Activated CD4-positive, alpha-beta T cell treated with anti-CD3 and anti-CD28 coated beads, Interleukin-2, amount 10 ng/mL, durations not matched to agents 24 days and 14 days (primary cell): ENCODE measurements at regions of chr4 and their contacts with region 1.

Region 1: DNA sequence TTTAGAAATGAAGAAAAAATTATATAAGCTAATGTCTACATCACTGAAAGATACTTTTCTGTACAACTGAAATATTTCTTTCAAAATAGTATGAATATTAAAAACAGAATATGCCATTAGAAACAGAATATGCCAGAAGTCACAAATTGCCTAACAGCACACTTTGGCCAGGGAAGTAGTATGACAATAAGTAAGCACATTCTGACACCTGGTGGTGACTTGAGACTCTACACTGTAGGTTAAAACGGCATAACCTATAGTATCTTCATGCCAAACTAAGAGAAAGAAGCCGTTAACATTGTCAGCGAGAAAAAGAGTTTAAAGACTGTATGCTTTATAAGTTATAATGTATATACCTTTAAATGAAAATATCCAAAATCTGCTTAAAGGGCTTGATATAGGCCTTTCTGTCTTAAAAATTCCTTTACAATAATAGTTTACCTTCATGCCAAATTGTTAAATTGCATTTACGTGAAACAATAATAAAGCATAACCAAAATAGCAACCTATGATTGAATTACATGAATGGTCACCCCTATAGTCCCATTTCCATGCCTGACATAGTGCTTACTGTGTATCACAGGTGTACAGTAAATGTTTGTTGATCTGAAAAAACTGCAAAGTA is 32.8 kb downstream of the FAM13A start:
- DNase-seq: peak; percentile 89
- H3K4me3 Mint-ChIP-seq: no peak overlapping the region
- H3K27ac Mint-ChIP-seq: no peak overlapping the region
- H3K4me1 Mint-ChIP-seq: peaks cover 2% of the 10 kb centered on the region
- H3K27me3 Mint-ChIP-seq: no peaks in the 10 kb centered on the region

Region 2: DNA sequence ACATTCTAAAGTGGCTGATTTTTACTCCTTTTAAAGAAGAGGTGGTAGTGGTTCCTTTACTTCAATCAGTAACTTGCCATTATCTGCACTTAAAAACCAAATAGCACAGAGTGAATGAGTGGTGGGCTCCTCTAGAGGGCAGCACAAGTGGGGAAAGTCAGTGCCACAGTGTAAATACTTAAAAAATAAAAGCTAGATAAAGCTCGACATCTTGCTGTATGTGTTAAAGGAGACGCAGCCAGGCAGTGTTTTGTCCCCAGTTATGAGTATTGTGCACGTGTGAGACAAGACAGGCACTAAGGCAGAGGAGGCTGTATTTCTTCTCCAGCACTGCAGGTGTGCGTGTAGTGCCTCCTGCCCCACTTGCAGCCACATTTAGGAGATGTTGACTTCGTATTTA is 351.2 kb before region 1 on chr4:
- intact Hi-C with region 1: loop called (anchors 2 kb)
- DNase-seq: peak; percentile 67
- H3K4me3 Mint-ChIP-seq: no peak overlapping the region
- H3K27ac Mint-ChIP-seq: no peak overlapping the region
- H3K4me1 Mint-ChIP-seq: peaks cover 3% of the 10 kb centered on the region
- H3K27me3 Mint-ChIP-seq: no peaks in the 10 kb centered on the region